ENCODE measurements at regions of chr3 and their contacts with region 1.

Region 1: DNA sequence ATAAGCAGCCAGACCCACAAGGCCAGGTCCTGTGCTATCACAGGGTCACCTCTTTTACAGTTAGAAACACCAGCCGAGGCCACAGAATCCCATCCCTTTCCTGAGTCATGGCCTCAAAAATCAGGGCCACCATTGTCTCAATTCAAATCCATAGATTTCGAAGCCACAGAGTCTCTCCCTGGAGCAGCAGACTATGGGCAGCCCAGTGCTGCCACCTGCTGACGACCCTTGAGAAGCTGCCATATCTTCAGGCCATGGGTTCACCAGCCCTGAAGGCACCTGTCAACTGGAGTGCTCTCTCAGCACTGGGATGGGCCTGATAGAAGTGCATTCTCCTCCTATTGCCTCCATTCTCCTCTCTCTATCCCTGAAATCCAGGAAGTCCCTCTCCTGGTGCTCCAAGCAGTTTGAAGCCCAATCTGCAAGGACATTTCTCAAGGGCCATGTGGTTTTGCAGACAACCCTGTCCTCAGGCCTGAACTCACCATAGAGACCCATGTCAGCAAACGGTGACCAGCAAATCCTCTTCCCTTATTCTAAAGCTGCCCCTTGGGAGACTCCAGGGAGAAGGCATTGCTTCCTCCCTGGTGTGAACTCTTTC is 39.6 kb downstream of the TGM4 start:
- DNase-seq: peak; percentile 69
- ATAC-seq: peak; percentile 82
- H3K4me3 ChIP-seq: no peak overlapping the region
- H3K27ac ChIP-seq: no peak overlapping the region
- H3K4me1 ChIP-seq: no peaks in the 10 kb centered on the region
- H3K27me3 ChIP-seq: no peaks in the 10 kb centered on the region; the same call in 1 of the 2 replicates
- CTCF ChIP-seq: peak; percentile 79
- POLR2A ChIP-seq: no peak
- RAD21 ChIP-seq: peak; percentile 92

Region 2: GRCh38 chr3:44648564-44649229 is 265.3 kb before region 1 on chr3 and contains the start of gene ZNF35:
- CTCF ChIA-PET with region 1: no interaction called
- POLR2A ChIA-PET with region 1: no interaction called
- dilution Hi-C with region 1: no loop called
- in situ Hi-C with region 1: no loop called
- intact Hi-C with region 1: loop called (anchors 10 kb)
- DNase-seq: peak; percentile 92
- ATAC-seq: peak; percentile 98
- H3K4me3 ChIP-seq: peak within 1 kb of the TSS; percentile 81
- H3K27ac ChIP-seq: peak within 1 kb of the TSS; percentile 65
- H3K4me1 ChIP-seq: no peaks in the 10 kb centered on the region; the same call in 1 of the 2 replicates
- H3K27me3 ChIP-seq: no peaks in the 10 kb centered on the region
- CTCF ChIP-seq: no peak
- POLR2A ChIP-seq: peak; percentile 71
- RAD21 ChIP-seq: no peak
- total RNA-seq, gene ZNF35: 19.2 and 19.5 TPM in 2 replicates

Region 3: GRCh38 chr3:44761424-44762169 is 152.4 kb before region 1 on chr3 and contains the starts of genes KIAA1143 and KIF15:
- CTCF ChIA-PET with region 1: no interaction called
- POLR2A ChIA-PET with region 1: no interaction called
- dilution Hi-C with region 1: no loop called
- in situ Hi-C with region 1: no loop called
- intact Hi-C with region 1: loop called (anchors 1 kb)
- DNase-seq: peak; percentile 95
- ATAC-seq: peak; percentile 92
- H3K4me3 ChIP-seq: peak within 1 kb of the TSS; percentile 69
- H3K27ac ChIP-seq: peak within 1 kb of the TSS; percentile 47
- H3K4me1 ChIP-seq: no peaks in the 10 kb centered on the region
- H3K27me3 ChIP-seq: no peaks in the 10 kb centered on the region
- CTCF ChIP-seq: no peak
- POLR2A ChIP-seq: peak; percentile 73
- RAD21 ChIP-seq: peak; percentile 3; the same call in 1 of the 2 replicates
- total RNA-seq, gene KIAA1143: 16.8 and 23.9 TPM in 2 replicates
- total RNA-seq, gene KIF15: 8.4 and 10.8 TPM in 2 replicates

Region 4: GRCh38 chr3:44861412-44862220 is 52.4 kb before region 1 on chr3 and contains the start of gene TMEM42:
- CTCF ChIA-PET with region 1: no interaction called
- POLR2A ChIA-PET with region 1: interaction called, 4 read pairs
- dilution Hi-C with region 1: no loop called
- in situ Hi-C with region 1: no loop called
- intact Hi-C with region 1: loop called (anchors 1 kb)
- DNase-seq: peak; percentile 90
- ATAC-seq: peak; percentile 98
- H3K4me3 ChIP-seq: peak within 1 kb of the TSS; percentile 72
- H3K27ac ChIP-seq: peak within 1 kb of the TSS; percentile 82
- H3K4me1 ChIP-seq: peaks cover 6% of the 10 kb centered on the region
- H3K27me3 ChIP-seq: no peaks in the 10 kb centered on the region
- CTCF ChIP-seq: peak; percentile 37; the same call in 1 of the 2 replicates
- POLR2A ChIP-seq: peak; percentile 91
- RAD21 ChIP-seq: no peak; the same call in 1 of the 2 replicates
- total RNA-seq, gene TMEM42: 10.3 and 13.1 TPM in 2 replicates